Ascending aorta (tissue), 2 donors: ENCODE measurements at regions of chr5 and their contacts with region 1.

Region 1: DNA sequence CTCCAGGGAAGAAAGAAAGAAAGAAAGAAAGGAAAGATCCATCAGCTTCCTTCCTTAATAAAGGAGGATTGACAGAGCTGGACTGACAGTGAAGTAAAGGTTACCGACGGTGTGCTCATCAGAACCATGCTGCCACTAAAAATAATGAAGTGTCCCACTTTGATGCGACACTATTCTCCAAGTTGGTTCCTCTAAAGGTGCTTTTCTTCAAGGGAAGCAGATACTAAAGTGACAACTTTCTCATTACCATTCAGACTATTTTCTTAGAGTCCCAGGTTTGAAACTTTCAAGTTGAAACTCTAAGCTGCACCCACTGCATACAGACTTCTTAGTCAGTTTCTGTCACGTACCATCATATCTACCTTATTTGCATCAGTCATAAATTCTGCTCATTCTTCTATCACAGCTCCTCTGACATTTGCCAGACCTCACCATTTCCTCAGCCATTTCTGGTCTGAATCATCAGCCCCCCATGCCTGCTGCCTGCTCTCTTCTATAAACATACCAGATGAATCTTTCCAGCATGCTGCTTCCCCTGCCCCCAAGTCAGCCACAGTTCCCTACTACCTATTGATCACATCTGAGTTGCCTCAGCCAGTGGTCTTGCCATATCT is 177.6 kb downstream of the DEPDC1B start:
- DNase-seq: no peak
- H3K4me3 ChIP-seq: no peak overlapping the region
- H3K27ac ChIP-seq: peak overlapping the region; percentile 82 to 90
- H3K4me1 ChIP-seq: peaks cover 29 to 30% of the 10 kb centered on the region in 2 donors
- H3K27me3 ChIP-seq: no peaks in the 10 kb centered on the region
- CTCF ChIP-seq: no peak

Region 2: DNA sequence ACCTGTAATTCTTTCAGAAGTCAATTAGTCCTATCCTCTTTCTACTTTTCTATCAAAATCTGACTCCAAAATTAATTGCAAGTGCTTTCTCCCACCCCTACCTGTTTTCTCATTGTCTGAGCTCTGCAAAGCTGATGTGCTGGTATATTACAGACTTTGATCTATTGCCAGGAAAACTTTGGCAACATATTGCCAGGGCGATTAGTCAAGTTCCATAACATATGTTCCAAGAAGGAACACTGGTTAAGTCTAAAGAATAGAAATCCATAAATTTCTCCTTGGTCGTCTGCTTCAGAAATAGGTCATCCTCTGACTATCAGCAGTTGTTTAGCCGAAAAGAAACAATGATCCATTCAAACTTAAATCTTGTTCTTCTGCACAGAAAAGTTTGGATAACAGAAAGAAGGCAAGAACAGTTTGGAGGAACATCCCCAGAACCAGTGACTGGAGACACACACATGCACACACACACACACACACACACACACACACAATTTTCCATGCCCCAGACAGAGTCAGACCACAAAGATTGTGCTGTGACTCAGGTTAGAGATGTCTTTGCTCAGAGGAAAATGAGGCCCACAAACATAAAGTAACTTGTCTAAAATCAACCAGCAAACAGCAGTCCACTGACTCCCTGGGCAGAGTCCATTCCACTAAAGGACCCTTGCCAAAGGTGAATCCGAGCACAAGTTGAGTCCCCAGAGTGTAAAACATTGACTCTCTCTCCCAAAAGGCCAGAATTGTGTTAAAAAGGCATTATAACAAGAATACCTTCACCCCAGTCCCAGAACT is 24.5 kb before region 1 on chr5:
- intact Hi-C with region 1: loop called (anchors 2 kb)
- DNase-seq: no peak
- H3K4me3 ChIP-seq: no peak overlapping the region
- H3K27ac ChIP-seq: peak overlapping the region; percentile 74 to 78
- H3K4me1 ChIP-seq: peaks cover 0 to 22% of the 10 kb centered on the region in 2 donors
- H3K27me3 ChIP-seq: no peaks in the 10 kb centered on the region
- CTCF ChIP-seq: no peak